ENCODE measurements at regions of chr1 and their contacts with region 1.

Region 1: DNA sequence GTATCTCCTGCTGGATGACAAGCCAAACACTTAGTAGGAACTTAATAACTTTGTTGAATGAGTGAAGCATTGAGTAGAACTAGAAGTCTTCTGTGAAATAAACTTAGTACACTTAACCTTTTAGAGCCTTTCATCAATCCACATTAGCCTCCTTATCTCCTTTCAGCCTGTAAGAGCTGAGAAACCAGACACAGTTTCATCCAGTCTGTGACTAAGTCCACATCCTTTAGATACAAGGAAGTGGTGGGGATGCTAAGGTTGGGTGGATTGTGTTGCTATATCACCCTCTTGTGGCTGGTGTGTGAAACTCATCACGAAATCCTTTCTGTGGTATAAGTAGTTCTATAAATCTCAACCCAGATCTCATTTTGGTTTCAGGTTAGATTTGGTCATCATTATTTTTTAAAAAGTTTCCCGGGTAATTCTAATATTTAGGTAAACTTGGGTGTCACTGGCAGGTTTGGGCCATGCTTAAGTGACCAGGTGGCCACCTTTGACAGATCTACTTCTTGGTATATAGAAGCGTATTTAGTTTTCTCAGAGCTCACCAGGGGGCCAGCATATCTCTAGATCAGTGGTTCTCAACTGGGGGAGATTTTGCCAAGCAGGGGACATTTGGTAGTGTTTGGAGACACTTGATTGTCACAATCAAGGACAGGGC is 27.8 kb upstream of the CD84 start:
- DNase-seq: peak; percentile 90
- ATAC-seq: peak; percentile 83
- H3K4me3 ChIP-seq: no peak overlapping the region
- H3K27ac ChIP-seq: peak overlapping the region; percentile 89
- H3K4me1 ChIP-seq: peaks cover 30% of the 10 kb centered on the region
- H3K27me3 ChIP-seq: no peaks in the 10 kb centered on the region
- CTCF ChIP-seq: peak; percentile 68 to 85 (median 84)
- EP300 ChIP-seq: no peak
- POLR2A ChIP-seq: no peak
- RAD21 ChIP-seq: peak; percentile 99

Region 2: GRCh38 chr1:160342953-160343869 is 263.9 kb before region 1 on chr1 and contains the starts of genes COPA and NCSTN:
- CTCF ChIA-PET with region 1: interaction called, 3 read pairs
- POLR2A ChIA-PET with region 1: no interaction called
- RAD21 ChIA-PET with region 1: interaction called, 3 read pairs
- SMC1A ChIA-PET with region 1: no interaction called
- in situ Hi-C with region 1: no loop called
- intact Hi-C with region 1: loop called (anchors 5 kb)
- DNase-seq: peak; percentile 75
- ATAC-seq: peak; percentile 90
- H3K4me3 ChIP-seq: peak within 1 kb of the TSS; percentile 96
- H3K27ac ChIP-seq: peak within 1 kb of the TSS; percentile 97
- H3K4me1 ChIP-seq: peaks cover 23% of the 10 kb centered on the region
- H3K27me3 ChIP-seq: no peaks in the 10 kb centered on the region
- CTCF ChIP-seq: no peak
- EP300 ChIP-seq: no peak
- POLR2A ChIP-seq: peak; percentile 96
- RAD21 ChIP-seq: no peak
- polyA plus RNA-seq, gene COPA: 53.7 to 70.6 TPM
- polyA plus RNA-seq, gene NCSTN: 33.3 to 41.6 TPM

Region 3: DNA sequence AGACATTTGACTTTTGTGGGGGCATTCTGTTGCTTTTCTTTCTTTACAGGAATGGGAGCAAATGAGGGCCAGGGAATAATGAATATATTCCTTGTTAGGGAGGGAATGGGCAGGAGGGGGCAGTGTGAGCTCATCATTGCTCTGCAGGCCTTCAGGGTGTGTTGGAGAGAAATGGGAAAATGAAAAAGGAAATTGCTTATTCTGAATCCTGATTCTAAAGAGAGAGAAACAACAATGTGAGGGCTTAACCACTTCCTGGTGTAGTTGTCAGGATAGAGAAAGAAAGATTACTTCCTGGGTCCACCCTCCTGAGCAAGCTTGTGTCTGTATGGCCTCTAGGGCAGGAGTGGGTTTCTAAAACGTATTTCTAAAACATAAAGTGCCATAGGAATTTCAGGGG is 178.5 kb before region 1 on chr1:
- CTCF ChIA-PET with region 1: interaction called, 204 read pairs
- POLR2A ChIA-PET with region 1: interaction called, 28 read pairs
- RAD21 ChIA-PET with region 1: interaction called, 142 read pairs
- SMC1A ChIA-PET with region 1: interaction called, 172 read pairs
- in situ Hi-C with region 1: loop called (anchors 5 kb)
- intact Hi-C with region 1: loop called (anchors 1 kb)
- DNase-seq: peak; percentile 81
- ATAC-seq: peak; percentile 54
- H3K4me3 ChIP-seq: no peak overlapping the region
- H3K27ac ChIP-seq: peak overlapping the region; percentile 100
- H3K4me1 ChIP-seq: peaks cover 52% of the 10 kb centered on the region
- H3K27me3 ChIP-seq: no peaks in the 10 kb centered on the region
- CTCF ChIP-seq: peak; percentile 58 to 90 (median 58); a peak in 5 of 6 replicates
- EP300 ChIP-seq: no peak
- POLR2A ChIP-seq: no peak
- RAD21 ChIP-seq: peak; percentile 98

Region 4: DNA sequence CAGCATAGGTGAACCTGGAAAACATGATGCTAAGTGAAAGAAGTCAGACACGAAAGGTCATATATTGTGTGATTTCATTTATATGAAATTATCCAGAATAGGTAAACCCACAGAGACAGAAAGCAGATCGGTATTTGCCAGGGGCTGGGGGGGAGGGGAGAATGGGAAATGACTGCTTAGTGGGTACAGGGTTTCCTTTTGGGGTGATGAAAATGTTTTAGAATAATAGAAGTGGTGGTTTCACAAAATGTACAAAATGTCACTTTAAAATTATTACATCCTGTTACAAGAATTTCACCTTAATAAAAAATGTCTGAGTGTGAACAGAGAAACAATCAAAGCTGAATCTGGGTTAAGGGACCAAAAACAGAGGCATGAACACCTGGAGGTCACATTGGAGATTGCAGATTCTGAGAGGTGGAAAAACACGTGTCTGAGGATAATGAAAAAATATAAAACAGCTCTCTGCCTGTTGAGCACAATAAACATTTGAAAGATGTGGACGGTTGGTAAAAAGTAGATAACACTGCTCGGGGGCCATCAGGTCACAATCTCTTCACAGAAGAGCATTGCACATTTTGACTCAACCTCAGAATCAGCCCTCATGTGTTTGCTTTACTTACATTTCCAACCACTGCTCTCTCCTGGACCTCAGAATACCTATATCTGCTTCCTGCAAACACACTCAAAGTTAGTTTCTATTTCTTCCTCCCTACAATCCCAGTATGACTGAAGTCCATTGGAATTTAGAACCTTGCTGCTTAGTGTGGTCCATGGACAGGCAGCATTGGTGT is 87.3 kb before region 1 on chr1:
- CTCF ChIA-PET with region 1: interaction called, 24 read pairs
- POLR2A ChIA-PET with region 1: interaction called, 6 read pairs
- RAD21 ChIA-PET with region 1: interaction called, 18 read pairs
- SMC1A ChIA-PET with region 1: interaction called, 29 read pairs
- in situ Hi-C with region 1: no loop called
- intact Hi-C with region 1: loop called (anchors 1 kb)
- DNase-seq: peak; percentile 64
- ATAC-seq: peak; percentile 70
- H3K4me3 ChIP-seq: peak overlapping the region; percentile 77
- H3K27ac ChIP-seq: peak overlapping the region; percentile 85
- H3K4me1 ChIP-seq: no peaks in the 10 kb centered on the region
- H3K27me3 ChIP-seq: no peaks in the 10 kb centered on the region
- CTCF ChIP-seq: peak in 2 of 3 experiments; percentile 25 to 27; a peak in 2 of 6 replicates
- EP300 ChIP-seq: no peak
- POLR2A ChIP-seq: no peak
- RAD21 ChIP-seq: peak; percentile 16; the same call in 1 of the 2 replicates

Region 5: GRCh38 chr1:160558660-160559380 is 48.3 kb before region 1 on chr1:
- CTCF ChIA-PET with region 1: interaction called, 355 read pairs
- POLR2A ChIA-PET with region 1: interaction called, 25 read pairs
- RAD21 ChIA-PET with region 1: interaction called, 257 read pairs
- SMC1A ChIA-PET with region 1: interaction called, 395 read pairs
- in situ Hi-C with region 1: no loop called
- intact Hi-C with region 1: no loop called
- DNase-seq: no peak
- ATAC-seq: no peak
- H3K4me3 ChIP-seq: 0 out of 2 replicates have a peak overlapping the region, but pooled peaks have one; percentile 31
- H3K27ac ChIP-seq: peak overlapping the region; percentile 64
- H3K4me1 ChIP-seq: no peaks in the 10 kb centered on the region; the same call in 1 of the 2 replicates
- H3K27me3 ChIP-seq: no peaks in the 10 kb centered on the region
- CTCF ChIP-seq: no peak
- EP300 ChIP-seq: no peak
- POLR2A ChIP-seq: no peak
- RAD21 ChIP-seq: no peak

Region 6: GRCh38 chr1:160580221-160580812 is 26.8 kb before region 1 on chr1:
- CTCF ChIA-PET with region 1: interaction called, 76 read pairs
- POLR2A ChIA-PET with region 1: interaction called, 45 read pairs
- RAD21 ChIA-PET with region 1: interaction called, 123 read pairs
- SMC1A ChIA-PET with region 1: interaction called, 117 read pairs
- in situ Hi-C with region 1: no loop called
- intact Hi-C with region 1: loop called (anchors 2 kb)
- DNase-seq: no peak
- ATAC-seq: no peak
- H3K4me3 ChIP-seq: no peak overlapping the region
- H3K27ac ChIP-seq: no peak overlapping the region
- H3K4me1 ChIP-seq: peaks cover 25% of the 10 kb centered on the region
- H3K27me3 ChIP-seq: no peaks in the 10 kb centered on the region
- CTCF ChIP-seq: no peak
- EP300 ChIP-seq: no peak
- POLR2A ChIP-seq: no peak
- RAD21 ChIP-seq: no peak

Region 7: DNA sequence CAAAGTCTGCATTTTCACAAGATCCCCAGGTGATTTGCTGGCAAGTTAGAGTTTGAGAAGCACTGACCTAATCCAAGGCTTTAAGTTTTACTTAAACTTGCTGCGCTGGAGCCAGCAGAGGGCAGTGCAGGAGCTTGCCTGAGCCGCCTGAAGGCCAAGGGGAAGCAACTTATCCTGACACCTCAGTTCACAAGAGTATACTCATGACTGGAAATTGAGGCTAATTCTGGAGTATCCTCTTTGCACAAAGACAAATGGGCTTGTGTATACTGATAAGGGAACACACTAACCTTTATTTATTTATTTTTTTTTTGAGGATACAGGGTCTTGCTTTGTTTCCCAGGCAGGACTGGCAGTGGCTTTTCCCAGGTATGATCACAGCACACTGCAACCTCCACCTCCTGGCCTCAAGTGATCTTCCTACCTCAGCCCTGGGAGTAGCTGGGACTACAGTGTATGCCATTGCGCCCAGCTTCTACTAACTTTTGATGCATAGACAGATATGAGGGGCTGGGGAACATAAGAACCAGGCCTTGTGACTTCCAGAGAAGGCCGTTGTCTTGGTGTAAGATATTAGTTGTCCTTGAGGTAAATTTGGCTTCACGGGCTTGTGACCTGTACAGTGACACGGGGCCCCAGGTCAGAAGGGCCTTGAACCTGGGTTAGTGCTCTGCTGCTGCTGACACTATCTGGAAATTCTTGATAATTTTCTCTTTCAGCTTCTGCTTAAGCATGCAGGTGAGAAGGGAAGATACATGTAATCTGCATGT is 68.7 kb after region 1 on chr1:
- CTCF ChIA-PET with region 1: interaction called, 12 read pairs
- POLR2A ChIA-PET with region 1: interaction called, 4 read pairs
- RAD21 ChIA-PET with region 1: interaction called, 9 read pairs
- SMC1A ChIA-PET with region 1: interaction called, 6 read pairs
- in situ Hi-C with region 1: no loop called
- intact Hi-C with region 1: no loop called
- DNase-seq: peak; percentile 76
- ATAC-seq: peak; percentile 88
- H3K4me3 ChIP-seq: peak overlapping the region; percentile 2; the same call in 1 of the 2 replicates
- H3K27ac ChIP-seq: peak overlapping the region; percentile 62
- H3K4me1 ChIP-seq: peaks cover 48% of the 10 kb centered on the region
- H3K27me3 ChIP-seq: no peaks in the 10 kb centered on the region
- CTCF ChIP-seq: peak; percentile 86 to 95 (median 92)
- EP300 ChIP-seq: peak in 1 of 2 experiments; percentile 10; a peak in 1 of 4 replicates
- POLR2A ChIP-seq: peak; percentile 31; the same call in 1 of the 2 replicates
- RAD21 ChIP-seq: peak; percentile 87